WTC11 (cell line): ENCODE measurements at regions of chr9 and their contacts with region 1.

Region 1: DNA sequence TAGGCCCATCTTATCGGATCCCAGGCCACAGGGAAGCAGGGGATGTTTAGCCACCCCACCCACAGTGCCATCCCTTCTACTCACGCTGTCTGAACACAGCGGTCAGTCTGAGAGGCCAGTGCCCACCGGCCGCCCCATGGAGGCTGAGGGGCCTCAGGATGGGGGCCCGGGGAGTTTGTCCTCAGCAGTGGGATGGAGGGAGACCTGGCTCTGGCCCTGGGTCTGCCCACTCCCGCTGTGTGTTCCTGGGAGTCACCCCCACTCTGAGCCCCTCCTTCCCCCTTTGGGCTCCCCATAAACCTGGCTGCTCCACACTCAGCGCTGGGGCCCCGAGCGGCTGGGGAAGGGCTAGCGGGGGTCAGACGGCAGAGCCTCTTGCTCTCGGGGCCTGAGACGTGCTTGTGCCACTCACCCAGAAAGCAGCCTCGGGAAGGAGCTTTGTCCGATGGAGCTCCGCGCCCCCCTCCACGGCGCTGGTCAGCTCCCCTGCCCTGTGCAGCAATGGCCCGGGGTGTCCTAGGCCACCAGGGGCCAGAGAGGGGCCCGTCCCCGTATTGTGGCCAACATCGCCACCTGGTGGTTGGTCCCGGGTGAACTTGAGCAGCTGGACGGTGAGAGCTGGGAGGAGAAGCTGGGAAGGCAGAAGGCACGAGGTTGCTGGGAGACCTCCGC is 10.9 kb upstream of the LAMC3 start:
- DNase-seq: peak; percentile 96
- ATAC-seq: peak; percentile 90
- H3K4me3 Mint-ChIP-seq: no peak overlapping the region
- H3K27ac Mint-ChIP-seq: no peak overlapping the region
- H3K4me1 Mint-ChIP-seq: peaks cover 3% of the 10 kb centered on the region; the same call in 1 of the 2 replicates
- H3K27me3 Mint-ChIP-seq: peaks cover 14% of the 10 kb centered on the region
- CTCF ChIP-seq: peak; percentile 83

Region 2: DNA sequence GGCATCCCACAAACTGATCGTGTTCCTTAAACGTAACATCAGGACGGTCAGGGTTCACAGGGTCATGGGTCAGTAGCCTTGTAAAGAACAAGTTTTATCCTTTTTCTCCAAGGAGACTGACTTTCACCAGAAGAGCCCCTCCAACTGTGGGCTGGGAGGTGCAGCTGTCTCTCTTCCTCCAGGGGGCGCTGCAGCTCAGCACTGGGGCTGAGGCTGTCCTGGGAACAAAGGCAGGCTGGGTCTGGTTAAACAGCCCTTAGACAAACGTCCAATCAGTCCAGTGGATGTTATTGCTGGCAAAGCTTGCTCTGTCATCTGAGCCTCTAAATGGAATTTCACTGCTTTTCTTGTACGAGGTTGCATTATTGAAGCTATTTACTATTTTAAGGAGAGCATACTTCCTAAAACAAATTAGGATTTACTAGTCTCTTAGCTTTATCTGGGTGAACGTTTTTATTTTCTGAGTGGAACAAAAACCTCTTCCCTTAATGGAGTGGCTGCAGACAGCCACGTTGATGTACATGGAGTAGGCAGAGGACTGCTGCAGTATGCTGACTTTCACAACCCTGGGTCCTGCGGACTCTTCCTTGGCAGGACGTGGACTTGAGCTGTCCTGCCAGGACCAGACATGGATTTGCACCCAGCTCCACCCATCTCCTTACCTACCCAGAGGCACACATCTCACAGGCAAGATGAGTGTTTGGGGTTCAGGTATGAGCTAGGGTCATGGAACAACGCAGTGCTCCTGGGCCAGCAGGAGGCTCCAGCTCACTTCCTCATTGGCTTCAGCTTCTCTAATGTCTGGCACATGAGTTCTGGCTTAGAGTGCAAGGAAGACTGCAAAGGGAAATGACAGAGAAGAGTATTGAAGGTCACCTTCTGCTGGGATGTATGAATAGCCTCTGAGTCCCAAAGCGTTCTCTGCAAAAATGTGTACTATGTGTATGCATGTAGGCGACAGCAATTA is 296.7 kb before region 1 on chr9:
- CTCF ChIA-PET with region 1: interaction called, 21 read pairs
- POLR2A ChIA-PET with region 1: no interaction called
- DNase-seq: peak; percentile 89
- ATAC-seq: peak; percentile 97
- H3K4me3 Mint-ChIP-seq: no peak overlapping the region
- H3K27ac Mint-ChIP-seq: peak overlapping the region; percentile 76
- H3K4me1 Mint-ChIP-seq: peaks cover 14% of the 10 kb centered on the region
- H3K27me3 Mint-ChIP-seq: no peaks in the 10 kb centered on the region
- CTCF ChIP-seq: peak; percentile 98

Region 3: GRCh38 chr9:130901498-130902203 is 96.4 kb before region 1 on chr9:
- CTCF ChIA-PET with region 1: interaction called, 69 read pairs
- POLR2A ChIA-PET with region 1: interaction called, 3 read pairs
- DNase-seq: no peak
- ATAC-seq: no peak
- H3K4me3 Mint-ChIP-seq: no peak overlapping the region
- H3K27ac Mint-ChIP-seq: no peak overlapping the region
- H3K4me1 Mint-ChIP-seq: no peaks in the 10 kb centered on the region
- H3K27me3 Mint-ChIP-seq: no peaks in the 10 kb centered on the region
- CTCF ChIP-seq: no peak

Region 4: DNA sequence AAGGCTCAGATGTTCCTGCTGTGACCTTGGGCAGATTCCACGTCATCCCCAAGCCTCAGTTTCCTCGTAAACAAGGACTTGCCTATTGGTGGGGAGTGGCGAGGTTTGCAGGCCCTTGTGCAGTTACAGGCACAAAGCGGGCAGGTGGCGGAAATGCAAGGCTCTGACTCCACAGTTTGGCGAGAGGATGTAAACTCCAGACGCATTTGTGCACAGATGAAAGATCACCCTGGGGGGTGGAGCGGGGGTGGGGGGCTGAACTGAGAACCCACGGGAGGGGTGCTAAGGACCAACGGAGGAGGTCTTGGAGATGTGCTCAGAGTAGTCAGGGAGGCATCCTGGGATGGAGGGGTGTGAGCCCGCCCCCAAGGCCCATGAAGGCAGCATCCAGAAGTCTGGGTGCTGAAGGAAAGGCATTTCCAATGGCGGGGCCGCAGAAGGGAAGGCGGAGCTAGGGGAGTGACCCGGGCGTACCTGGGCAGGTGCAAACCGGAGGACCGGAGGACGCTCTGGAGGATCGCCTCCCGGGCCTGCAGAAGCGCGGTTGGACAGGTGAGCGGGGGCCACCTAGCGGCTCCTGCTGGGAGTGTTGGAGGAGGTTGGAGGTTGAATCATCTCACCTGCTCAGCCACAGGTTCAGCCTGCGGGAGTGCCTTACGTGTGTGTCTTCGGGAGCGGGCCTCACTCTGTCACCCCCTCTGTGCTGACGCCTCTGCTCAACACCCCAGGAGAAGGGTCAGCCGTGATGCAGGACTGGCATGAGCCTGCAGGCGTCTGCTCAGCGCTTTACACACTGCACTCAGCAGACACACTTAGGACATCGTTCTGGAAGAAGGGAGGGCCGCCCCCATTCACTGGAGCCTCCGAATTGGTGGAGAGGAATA is 57.1 kb before region 1 on chr9:
- CTCF ChIA-PET with region 1: interaction called, 21 read pairs
- POLR2A ChIA-PET with region 1: no interaction called
- DNase-seq: peak; percentile 98
- ATAC-seq: peak; percentile 76
- H3K4me3 Mint-ChIP-seq: peak overlapping the region; percentile 61
- H3K27ac Mint-ChIP-seq: no peak overlapping the region; the same call in 1 of the 2 replicates
- H3K4me1 Mint-ChIP-seq: peaks cover 26% of the 10 kb centered on the region
- H3K27me3 Mint-ChIP-seq: peaks cover 50% of the 10 kb centered on the region
- CTCF ChIP-seq: peak; percentile 71

Region 5: GRCh38 chr9:130973169-130973936 is 24.7 kb before region 1 on chr9:
- CTCF ChIA-PET with region 1: interaction called, 31 read pairs
- POLR2A ChIA-PET with region 1: no interaction called
- DNase-seq: no peak
- ATAC-seq: no peak
- H3K4me3 Mint-ChIP-seq: no peak overlapping the region
- H3K27ac Mint-ChIP-seq: no peak overlapping the region
- H3K4me1 Mint-ChIP-seq: 0 out of 2 replicates have a peak, but pooled peaks cover 4% of the 10 kb centered on the region
- H3K27me3 Mint-ChIP-seq: 0 out of 2 replicates have a peak, but pooled peaks cover 2% of the 10 kb centered on the region
- CTCF ChIP-seq: no peak

Region 6: GRCh38 chr9:131018621-131019020 is 20.6 kb after region 1 on chr9:
- CTCF ChIA-PET with region 1: interaction called, 11 read pairs
- POLR2A ChIA-PET with region 1: no interaction called
- DNase-seq: no peak
- ATAC-seq: peak; percentile 38
- H3K4me3 Mint-ChIP-seq: no peak overlapping the region
- H3K27ac Mint-ChIP-seq: peak overlapping the region; percentile 92
- H3K4me1 Mint-ChIP-seq: peaks cover 16% of the 10 kb centered on the region
- H3K27me3 Mint-ChIP-seq: no peaks in the 10 kb centered on the region
- CTCF ChIP-seq: no peak